Natural killer cell (primary cell): ENCODE measurements at regions of chr2 and their contacts with region 1.

Region 1: GRCh38 chr2:224576088-224576715 is 9.0 kb downstream of the CUL3 start:
- DNase-seq: peak in 1 of 2 donors; percentile 20
- ATAC-seq: peak; percentile 68 to 74 (median 73)
- H3K4me3 ChIP-seq: no peak overlapping the region
- H3K4me3 Mint-ChIP-seq: peak overlapping the region; percentile 58
- H3K27ac ChIP-seq: peak overlapping the region; percentile 61
- H3K27ac Mint-ChIP-seq: peak overlapping the region; percentile 62 to 86
- H3K4me1 ChIP-seq: peaks cover 30% of the 10 kb centered on the region
- H3K4me1 Mint-ChIP-seq: peaks cover 82 to 84% of the 10 kb centered on the region in 2 donors
- H3K27me3 ChIP-seq: no peaks in the 10 kb centered on the region
- H3K27me3 Mint-ChIP-seq: no peaks in the 10 kb centered on the region
- CTCF ChIP-seq: no peak

Region 2: DNA sequence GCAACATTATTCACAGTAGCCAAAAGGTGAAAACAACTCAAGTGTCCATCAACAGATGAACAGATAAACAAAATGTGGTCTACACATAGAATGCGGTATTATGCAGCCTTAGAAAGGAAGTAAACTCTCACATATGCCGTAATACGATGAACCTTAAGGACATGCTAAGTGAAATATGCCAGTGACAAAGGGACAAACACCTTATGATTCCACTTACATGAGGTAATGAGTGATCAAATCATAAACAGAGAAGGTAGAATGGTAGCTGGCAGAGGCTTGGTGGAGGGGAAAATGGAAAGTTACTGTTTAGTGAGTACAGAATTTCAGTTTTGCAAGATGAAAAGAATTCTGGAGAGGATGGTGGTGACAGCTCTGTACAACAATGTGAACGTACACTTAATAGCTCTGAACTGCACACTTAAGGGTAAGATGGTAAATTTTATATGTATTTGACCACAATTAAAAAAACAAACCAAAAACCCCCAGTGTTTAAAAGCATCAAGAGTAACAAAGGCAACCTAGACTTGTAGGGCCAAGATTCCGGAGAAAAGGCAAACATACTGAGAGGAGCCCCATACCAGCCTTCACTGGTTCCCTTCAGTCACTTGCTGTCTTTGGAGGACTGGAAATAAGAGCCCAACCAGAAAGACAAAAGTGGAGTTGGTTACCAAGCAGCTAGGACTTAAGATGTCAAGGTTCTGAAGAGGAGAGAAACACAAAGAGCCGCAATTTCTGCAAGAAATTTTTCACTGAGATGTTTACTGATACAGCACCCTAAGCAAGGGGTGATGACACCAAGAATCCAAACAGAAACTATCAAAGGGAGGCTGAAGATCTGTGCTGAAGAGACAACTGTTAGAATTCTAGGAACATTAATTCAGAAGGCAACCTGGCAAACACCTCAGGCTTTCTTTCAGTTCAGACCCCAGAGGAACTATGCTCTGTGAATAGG is 52.3 kb before region 1 on chr2:
- intact Hi-C with region 1: loop called (anchors 2 kb)
- DNase-seq: peak in 1 of 2 donors; percentile 52
- ATAC-seq: peak; percentile 69 to 85 (median 77)
- H3K4me3 ChIP-seq: no peak overlapping the region
- H3K4me3 Mint-ChIP-seq: peak overlapping the region; percentile 83
- H3K27ac ChIP-seq: peak overlapping the region; percentile 76
- H3K27ac Mint-ChIP-seq: peak overlapping the region; percentile 85 to 90
- H3K4me1 ChIP-seq: peaks cover 21% of the 10 kb centered on the region
- H3K4me1 Mint-ChIP-seq: peaks cover 69% of the 10 kb centered on the region in 2 donors
- H3K27me3 ChIP-seq: no peaks in the 10 kb centered on the region
- H3K27me3 Mint-ChIP-seq: no peaks in the 10 kb centered on the region
- CTCF ChIP-seq: no peak

Region 3: DNA sequence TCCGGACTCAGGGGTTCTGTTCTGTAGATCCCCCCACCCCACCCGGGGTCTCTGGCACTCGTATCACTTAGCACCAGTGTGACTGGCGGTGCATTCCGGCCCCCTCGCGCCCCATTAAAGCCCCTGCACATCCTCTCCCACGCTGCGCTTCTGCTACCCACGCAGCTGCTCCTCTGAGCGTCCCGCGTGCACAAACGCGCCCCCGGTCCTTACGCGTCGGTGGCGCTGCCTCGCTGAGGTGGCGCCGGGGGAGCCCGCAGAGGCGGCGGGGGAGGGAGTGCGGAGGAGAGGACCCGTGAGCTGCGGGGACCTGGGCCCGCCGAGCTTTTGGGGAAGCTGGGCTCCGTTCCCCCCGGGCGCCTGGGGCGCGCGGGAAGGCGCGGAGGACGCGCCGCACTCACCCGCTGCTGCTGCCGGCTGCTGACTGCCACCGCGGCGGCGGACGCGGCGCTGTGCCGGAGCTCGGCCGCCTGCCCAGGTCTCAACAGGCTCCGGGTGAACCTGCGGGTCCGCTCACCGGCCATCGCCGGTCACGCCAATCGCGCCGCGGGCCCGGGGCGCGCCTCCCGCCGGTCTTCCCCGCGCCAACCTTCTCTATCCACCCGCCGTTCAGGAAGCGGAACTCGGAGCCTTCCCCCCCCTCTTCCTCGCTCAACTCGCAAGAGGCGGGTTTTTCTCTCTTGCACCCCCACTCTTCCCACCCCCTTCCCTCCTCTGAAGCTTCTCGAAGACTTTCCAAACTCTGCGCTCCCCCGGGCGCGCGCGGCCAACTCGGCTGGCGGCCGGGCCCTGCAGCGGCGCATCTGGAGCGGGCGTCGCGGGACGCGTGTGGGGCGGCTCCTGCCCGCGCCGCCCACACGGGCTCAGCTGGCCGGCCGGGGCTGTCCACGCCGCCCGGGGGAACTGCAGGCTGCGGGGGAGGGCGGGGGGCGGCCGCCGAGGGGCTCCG is 465.9 kb after region 1 on chr2 and contains the start of gene DOCK10:
- intact Hi-C with region 1: no loop called
- DNase-seq: peak; percentile 37 to 78
- ATAC-seq: peak; percentile 47 to 73 (median 53)
- H3K4me3 ChIP-seq: peak within 1 kb of the TSS; percentile 86
- H3K4me3 Mint-ChIP-seq: peak within 1 kb of the TSS; percentile 98
- H3K27ac ChIP-seq: peak within 1 kb of the TSS; percentile 95
- H3K27ac Mint-ChIP-seq: peak within 1 kb of the TSS; percentile 100
- H3K4me1 ChIP-seq: peaks cover 18% of the 10 kb centered on the region
- H3K4me1 Mint-ChIP-seq: peaks cover 55 to 56% of the 10 kb centered on the region in 2 donors
- H3K27me3 ChIP-seq: no peaks in the 10 kb centered on the region
- H3K27me3 Mint-ChIP-seq: peaks cover 0 to 5% of the 10 kb centered on the region in 2 donors
- CTCF ChIP-seq: no peak
- total RNA-seq, gene DOCK10: 181 to 213 (median 182) TPM